ENCODE measurements at regions of chr12 and their contacts with region 1.

Region 1: GRCh38 chr12:109597795-109598427 is 24.3 kb downstream of the MVK start:
- H3K4me3 Mint-ChIP-seq: no peak overlapping the region
- H3K27ac Mint-ChIP-seq: no peak overlapping the region
- H3K4me1 Mint-ChIP-seq: peaks cover 34% of the 10 kb centered on the region
- H3K27me3 Mint-ChIP-seq: peaks cover 6% of the 10 kb centered on the region

Region 2: DNA sequence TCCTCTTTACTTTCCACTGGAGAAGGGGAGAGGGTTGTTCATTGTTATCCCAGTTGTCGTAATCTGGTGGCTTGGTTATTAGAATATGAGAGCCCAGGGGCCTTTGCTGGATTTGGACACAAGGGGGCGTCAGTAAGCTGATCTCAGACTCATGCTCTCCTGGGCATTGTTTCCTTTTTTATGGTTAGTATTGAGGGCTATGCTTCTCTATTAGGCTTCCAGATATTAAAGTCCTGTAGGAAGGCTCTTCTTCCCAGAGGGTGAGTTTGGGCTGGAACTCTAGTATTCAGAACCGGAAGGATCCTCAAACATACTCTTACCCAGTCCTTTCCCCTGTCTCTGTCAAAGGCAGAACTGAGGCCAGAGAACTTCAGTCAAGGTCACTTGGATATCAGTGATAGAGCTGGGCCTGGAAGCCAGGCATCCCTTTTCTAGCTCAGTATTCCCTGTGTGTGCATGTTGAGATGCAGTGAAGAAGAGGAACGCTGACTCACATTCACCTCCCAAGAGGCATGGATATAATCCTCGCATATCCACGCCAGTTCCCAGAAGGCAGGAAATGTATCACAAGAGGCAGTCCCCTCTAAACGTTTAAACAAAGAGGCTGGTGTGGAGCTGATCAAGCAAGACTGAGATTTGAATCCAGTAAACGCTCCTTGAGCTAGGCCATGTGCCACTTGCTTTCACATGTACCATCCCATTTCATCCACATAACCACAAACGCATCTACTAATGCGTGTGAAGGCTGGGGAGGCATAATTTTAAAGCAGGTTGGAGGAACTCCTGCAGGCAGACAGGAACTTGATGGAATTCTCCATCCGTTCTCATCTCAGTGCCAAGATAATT is 78.9 kb before region 1 on chr12:
- intact Hi-C with region 1: loop called (anchors 5 kb)
- H3K4me3 Mint-ChIP-seq: no peak overlapping the region
- H3K27ac Mint-ChIP-seq: no peak overlapping the region
- H3K4me1 Mint-ChIP-seq: no peaks in the 10 kb centered on the region
- H3K27me3 Mint-ChIP-seq: no peaks in the 10 kb centered on the region

Region 3: DNA sequence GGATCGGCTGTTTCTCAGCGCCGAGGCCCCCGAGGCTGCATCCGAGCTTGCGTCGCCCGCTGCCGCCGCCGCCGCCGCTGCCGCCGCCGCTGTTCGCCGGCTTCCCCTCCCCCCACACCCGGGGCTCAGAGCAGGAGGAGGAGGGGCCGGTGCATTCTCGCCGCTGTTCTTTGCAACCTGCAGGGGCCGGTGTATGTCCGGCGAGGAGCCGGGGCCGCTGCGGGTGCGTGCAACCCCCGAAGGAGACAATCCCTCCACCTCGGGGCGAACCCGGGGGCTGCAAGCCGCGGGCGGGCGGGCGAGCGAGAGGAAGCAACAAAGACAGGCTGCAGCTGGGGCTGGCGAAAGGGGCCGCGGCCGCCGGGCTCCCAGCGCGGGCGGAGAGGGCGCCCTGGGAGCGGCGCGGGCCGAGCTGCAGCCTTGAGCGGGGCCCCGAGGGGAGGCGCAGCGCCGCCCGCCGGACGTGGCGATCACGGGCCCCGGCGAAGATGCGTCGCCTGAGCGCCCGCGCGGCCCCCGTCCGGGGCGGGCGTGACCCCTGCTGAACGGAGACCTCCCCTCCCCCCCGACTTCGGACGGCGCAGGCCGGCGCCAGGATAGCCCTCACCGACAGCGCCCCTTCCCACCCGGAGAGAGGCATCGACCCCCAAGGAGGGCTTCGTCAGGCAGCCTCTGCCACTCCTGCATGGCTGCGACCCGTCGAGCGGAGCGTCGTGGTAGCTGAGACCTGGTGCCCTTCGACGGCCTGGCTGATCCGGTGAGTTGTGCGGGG is 116.4 kb after region 1 on chr12:
- intact Hi-C with region 1: loop called (anchors 1 kb)
- H3K4me3 Mint-ChIP-seq: peak overlapping the region; percentile 72
- H3K27ac Mint-ChIP-seq: no peak overlapping the region
- H3K4me1 Mint-ChIP-seq: peaks cover 3% of the 10 kb centered on the region
- H3K27me3 Mint-ChIP-seq: peaks cover 81% of the 10 kb centered on the region

Region 4: DNA sequence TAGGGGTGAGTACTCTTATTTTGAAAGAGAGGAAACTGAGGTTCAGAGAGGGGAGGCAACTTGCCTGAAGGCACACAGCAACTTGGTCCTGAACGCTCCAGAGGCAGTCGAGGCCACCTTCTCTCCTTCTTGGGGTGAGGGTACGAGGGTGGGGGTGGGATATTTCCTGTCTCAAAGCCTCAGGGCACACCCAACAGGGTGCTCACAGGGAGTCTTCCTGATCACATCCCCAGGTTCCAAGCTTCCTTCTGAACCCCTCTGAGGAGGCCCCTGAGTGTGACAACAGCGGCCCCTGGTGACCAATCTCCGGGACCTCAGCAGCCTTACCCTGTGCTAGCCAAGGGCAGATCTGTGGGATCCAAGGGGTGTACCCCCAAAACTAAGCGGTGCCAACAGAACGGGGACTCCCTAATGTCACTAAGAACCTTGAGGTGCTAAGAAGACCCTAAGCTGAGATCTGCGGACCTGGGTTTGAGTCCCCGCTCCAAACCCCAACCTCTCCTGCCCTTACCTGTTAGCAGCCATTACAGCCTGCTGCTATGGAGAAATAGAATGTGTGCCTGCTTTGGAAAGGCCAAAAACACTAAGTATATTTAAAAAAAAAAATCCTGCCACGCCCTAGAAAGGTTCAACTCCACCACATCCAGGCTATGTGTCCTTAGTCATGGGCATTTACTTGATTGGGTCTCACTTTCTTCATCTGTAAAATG is 177.4 kb after region 1 on chr12:
- intact Hi-C with region 1: loop called (anchors 1 kb)
- H3K4me3 Mint-ChIP-seq: no peak overlapping the region
- H3K27ac Mint-ChIP-seq: no peak overlapping the region
- H3K4me1 Mint-ChIP-seq: peaks cover 18% of the 10 kb centered on the region
- H3K27me3 Mint-ChIP-seq: peaks cover 20% of the 10 kb centered on the region

Measured in dendritic cell treated with granulocyte-macrophage colony-stimulating factor and Interleukin-4, amounts not matched to agents 40 ng/mL and 50 ng/mL, for 4 days (primary cell).